IMR-90 (cell line): ENCODE measurements at regions of chr17 and their contacts with region 1.

Region 1: GRCh38 chr17:8441690-8442089 is 6.0 kb downstream of the NDEL1 start:
- DNase-seq: no peak
- ATAC-seq: no peak
- H3K4me3 ChIP-seq: no peak overlapping the region
- H3K27ac ChIP-seq: no peak overlapping the region
- H3K4me1 ChIP-seq: peaks cover 2% of the 10 kb centered on the region; the same call in 1 of the 2 replicates
- H3K27me3 ChIP-seq: no peaks in the 10 kb centered on the region
- CTCF ChIP-seq: no peak
- POLR2A ChIP-seq: no peak
- RAD21 ChIP-seq: no peak

Region 2: DNA sequence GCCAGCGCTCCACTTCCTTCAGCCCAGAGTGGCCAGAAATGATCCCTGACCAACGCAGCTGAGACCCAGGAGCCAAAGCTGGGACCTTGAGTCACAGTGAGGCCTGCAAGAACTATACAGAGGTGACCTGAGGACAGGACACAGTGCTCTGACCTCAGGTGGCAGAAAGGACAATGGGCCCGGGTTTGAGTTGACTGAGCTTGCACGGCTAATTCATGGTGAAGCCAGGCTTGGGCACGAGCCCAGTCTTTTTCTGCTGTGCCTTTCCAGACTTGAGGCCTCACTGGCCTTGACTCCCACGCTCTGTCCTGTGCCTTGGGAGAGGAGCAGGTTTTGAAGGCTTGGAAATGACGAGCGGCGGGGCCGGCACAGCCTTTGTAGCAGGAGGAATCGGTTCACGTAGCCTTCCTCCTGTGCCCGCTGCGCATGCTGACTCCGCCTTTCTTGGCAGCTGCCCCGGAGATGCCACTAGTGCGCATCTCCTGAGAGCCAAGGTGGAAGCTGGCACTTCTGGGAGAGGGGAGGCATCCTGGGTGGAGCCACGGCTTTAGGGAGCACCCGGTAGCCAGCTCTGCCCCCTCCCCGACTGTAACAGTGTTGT is 28.9 kb after region 1 on chr17:
- CTCF ChIA-PET with region 1: no interaction called
- POLR2A ChIA-PET with region 1: no interaction called
- dilution Hi-C with region 1: no loop called
- in situ Hi-C with region 1: no loop called
- intact Hi-C with region 1: no loop called
- DNase-seq: no peak
- ATAC-seq: no peak
- H3K4me3 ChIP-seq: no peak overlapping the region
- H3K27ac ChIP-seq: no peak overlapping the region
- H3K4me1 ChIP-seq: peaks cover 6% of the 10 kb centered on the region; the same call in 1 of the 2 replicates
- H3K27me3 ChIP-seq: no peaks in the 10 kb centered on the region
- CTCF ChIP-seq: no peak
- POLR2A ChIP-seq: no peak
- RAD21 ChIP-seq: no peak

Region 3: DNA sequence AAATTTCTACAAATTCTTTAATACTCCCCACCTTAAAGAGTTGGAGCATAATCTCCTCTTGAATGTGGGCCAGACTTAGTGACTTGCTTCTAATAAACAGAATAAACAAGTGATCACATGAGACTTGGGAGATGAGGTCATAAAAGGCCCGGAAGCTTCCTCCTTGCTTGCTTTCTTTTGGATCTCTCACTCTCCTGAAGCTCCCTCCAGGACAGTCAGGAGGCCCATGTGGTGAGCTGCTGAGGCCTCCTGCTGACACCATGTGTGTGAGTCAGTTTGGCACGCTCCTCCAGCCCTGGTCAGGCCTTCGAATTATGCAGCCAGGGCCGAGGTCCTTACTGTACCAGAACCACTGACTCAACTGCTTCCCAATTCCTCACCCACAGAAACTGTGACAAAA is 47.2 kb after region 1 on chr17:
- CTCF ChIA-PET with region 1: no interaction called
- POLR2A ChIA-PET with region 1: no interaction called
- dilution Hi-C with region 1: no loop called
- in situ Hi-C with region 1: no loop called
- intact Hi-C with region 1: loop called (anchors 5 kb)
- DNase-seq: peak; percentile 98
- ATAC-seq: peak; percentile 98
- H3K4me3 ChIP-seq: no peak overlapping the region
- H3K27ac ChIP-seq: peak overlapping the region; percentile 3; the same call in 1 of the 2 replicates
- H3K4me1 ChIP-seq: peaks cover 2% of the 10 kb centered on the region; the same call in 1 of the 2 replicates
- H3K27me3 ChIP-seq: no peaks in the 10 kb centered on the region
- CTCF ChIP-seq: 0 out of 2 replicates have a peak, but pooled peaks have one; percentile 16
- POLR2A ChIP-seq: no peak
- RAD21 ChIP-seq: peak; percentile 31; the same call in 1 of the 2 replicates